Endothelial cell of umbilical vein (primary cell): ENCODE measurements at regions of chr2 and their contacts with region 1.

Region 1: DNA sequence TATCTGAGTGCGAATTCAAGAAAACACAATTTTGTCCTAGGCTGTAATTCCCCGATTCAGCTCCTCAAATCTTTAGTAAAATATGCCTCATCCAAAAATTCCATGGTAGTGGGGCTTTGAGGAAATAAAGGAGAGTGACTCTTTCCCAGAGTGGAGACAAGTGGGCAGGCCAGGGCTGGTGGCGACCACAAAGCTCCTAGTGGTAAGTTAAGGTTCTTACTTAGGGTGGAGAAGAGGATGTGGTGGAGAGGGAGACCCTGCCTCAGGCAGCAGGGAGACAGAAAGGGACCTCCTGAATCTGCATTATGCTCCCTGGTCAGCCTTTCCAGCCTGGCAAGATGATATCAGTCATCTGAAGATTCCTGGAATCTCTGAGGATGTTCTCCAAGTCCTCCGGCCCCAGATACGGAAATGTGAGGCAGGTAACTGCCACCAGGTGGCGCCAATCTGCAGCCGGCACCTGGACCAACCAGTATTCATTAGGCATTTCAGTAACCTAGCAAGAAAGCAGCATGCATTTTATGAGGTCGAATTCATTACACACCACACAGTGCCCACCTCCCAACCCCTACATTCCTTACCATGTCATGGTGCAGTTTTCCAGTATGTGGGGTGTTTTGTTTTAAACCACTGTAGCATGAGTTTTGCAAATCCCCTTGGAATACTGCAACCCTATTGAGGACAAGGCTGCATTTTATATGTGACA is 106.4 kb downstream of the POLE4 start:
- DNase-seq: peak; percentile 66
- H3K4me3 ChIP-seq: no peak overlapping the region
- H3K27ac ChIP-seq: no peak overlapping the region
- H3K4me1 ChIP-seq: no peaks in the 10 kb centered on the region
- H3K27me3 ChIP-seq: no peaks in the 10 kb centered on the region
- CTCF ChIP-seq: peak; percentile 88 to 91
- POLR2A ChIP-seq: no peak

Region 2: DNA sequence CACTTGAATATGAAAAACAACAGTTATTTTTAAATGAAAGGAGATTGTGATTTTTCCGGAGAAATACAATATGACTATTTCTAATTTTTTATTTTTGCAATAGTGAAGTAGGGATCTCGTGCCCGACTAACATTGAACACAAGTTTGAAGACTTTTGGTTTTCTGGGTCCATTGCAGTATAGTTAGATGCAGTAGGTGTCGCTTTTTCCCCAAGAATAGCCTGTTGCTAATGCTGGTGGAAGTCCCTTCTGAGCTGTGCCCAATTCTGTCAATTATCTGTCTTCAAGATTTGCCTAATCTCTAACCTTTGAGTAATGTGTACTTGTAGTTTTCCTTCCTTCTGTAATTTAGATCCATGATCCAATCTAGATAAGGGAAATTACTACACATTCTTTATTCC is 374.3 kb before region 1 on chr2:
- CTCF ChIA-PET with region 1: interaction called, 11 read pairs
- POLR2A ChIA-PET with region 1: no interaction called
- dilution Hi-C with region 1: no loop called
- intact Hi-C with region 1: loop called (anchors 1 kb)
- DNase-seq: peak; percentile 68
- H3K4me3 ChIP-seq: no peak overlapping the region
- H3K27ac ChIP-seq: no peak overlapping the region
- H3K4me1 ChIP-seq: no peaks in the 10 kb centered on the region
- H3K27me3 ChIP-seq: peaks cover 22% of the 10 kb centered on the region in 2 experiments
- CTCF ChIP-seq: peak; percentile 61 to 65
- POLR2A ChIP-seq: no peak

Region 3: DNA sequence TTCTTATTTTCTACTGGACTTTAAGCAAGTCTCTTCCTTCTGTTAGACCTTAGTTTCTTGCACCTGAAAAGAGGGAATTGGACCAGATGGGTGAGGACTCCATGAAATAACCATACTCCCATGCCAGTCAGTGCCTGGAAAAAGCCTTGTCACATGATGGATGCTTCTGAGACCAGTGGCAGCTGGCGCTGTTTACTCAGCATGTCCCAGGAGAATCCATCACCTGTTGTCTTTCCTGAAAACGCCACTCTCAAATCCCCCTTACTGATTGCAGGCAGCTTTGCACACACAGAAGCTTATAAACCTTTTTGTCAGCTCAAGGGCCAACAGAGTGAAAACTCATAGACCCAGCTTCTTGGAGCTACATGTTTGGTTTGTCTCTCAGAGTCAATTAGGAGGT is 11.2 kb after region 1 on chr2:
- CTCF ChIA-PET with region 1: interaction called, 12 read pairs
- POLR2A ChIA-PET with region 1: no interaction called
- dilution Hi-C with region 1: no loop called
- intact Hi-C with region 1: no loop called
- DNase-seq: no peak
- H3K4me3 ChIP-seq: no peak overlapping the region
- H3K27ac ChIP-seq: no peak overlapping the region
- H3K4me1 ChIP-seq: no peaks in the 10 kb centered on the region
- H3K27me3 ChIP-seq: no peaks in the 10 kb centered on the region
- CTCF ChIP-seq: no peak
- POLR2A ChIP-seq: no peak

Region 4: GRCh38 chr2:75241696-75242095 is 176.9 kb after region 1 on chr2:
- CTCF ChIA-PET with region 1: interaction called, 41 read pairs
- POLR2A ChIA-PET with region 1: no interaction called
- dilution Hi-C with region 1: no loop called
- intact Hi-C with region 1: loop called (anchors 1 kb)
- DNase-seq: peak; percentile 8
- H3K4me3 ChIP-seq: no peak overlapping the region
- H3K27ac ChIP-seq: no peak overlapping the region
- H3K4me1 ChIP-seq: no peaks in the 10 kb centered on the region
- H3K27me3 ChIP-seq: no peaks in the 10 kb centered on the region
- CTCF ChIP-seq: peak; percentile 13 to 25
- POLR2A ChIP-seq: no peak

Region 5: GRCh38 chr2:75503048-75503607 is 438.3 kb after region 1 on chr2:
- CTCF ChIA-PET with region 1: no interaction called
- POLR2A ChIA-PET with region 1: no interaction called
- dilution Hi-C with region 1: no loop called
- intact Hi-C with region 1: no loop called
- DNase-seq: peak; percentile 97
- H3K4me3 ChIP-seq: no peak overlapping the region
- H3K27ac ChIP-seq: peak overlapping the region; percentile 96
- H3K4me1 ChIP-seq: peaks cover 74% of the 10 kb centered on the region
- H3K27me3 ChIP-seq: no peaks in the 10 kb centered on the region
- CTCF ChIP-seq: no peak
- POLR2A ChIP-seq: peak; percentile 68